MCF 10A (cell line): ENCODE measurements at regions of chr2 and their contacts with region 1.

Region 1: GRCh38 chr2:7363906-7364305 is 446.7 kb downstream of the RNF144A start:
- DNase-seq: peak; percentile 42
- H3K4me3 Mint-ChIP-seq: no peak overlapping the region
- H3K27ac Mint-ChIP-seq: no peak overlapping the region
- H3K4me1 Mint-ChIP-seq: no peaks in the 10 kb centered on the region
- H3K27me3 Mint-ChIP-seq: no peaks in the 10 kb centered on the region
- CTCF ChIP-seq: no peak

Region 2: GRCh38 chr2:7118606-7119503 is 245.1 kb before region 1 on chr2:
- CTCF ChIA-PET with region 1: no interaction called
- POLR2A ChIA-PET with region 1: no interaction called
- intact Hi-C with region 1: loop called (anchors 10 kb)
- DNase-seq: peak; percentile 40
- H3K4me3 Mint-ChIP-seq: no peak overlapping the region
- H3K27ac Mint-ChIP-seq: no peak overlapping the region
- H3K4me1 Mint-ChIP-seq: no peaks in the 10 kb centered on the region
- H3K27me3 Mint-ChIP-seq: peaks cover 41% of the 10 kb centered on the region
- CTCF ChIP-seq: peak; percentile 38